ENCODE measurements at regions of chr10 and their contacts with region 1.

Region 1: DNA sequence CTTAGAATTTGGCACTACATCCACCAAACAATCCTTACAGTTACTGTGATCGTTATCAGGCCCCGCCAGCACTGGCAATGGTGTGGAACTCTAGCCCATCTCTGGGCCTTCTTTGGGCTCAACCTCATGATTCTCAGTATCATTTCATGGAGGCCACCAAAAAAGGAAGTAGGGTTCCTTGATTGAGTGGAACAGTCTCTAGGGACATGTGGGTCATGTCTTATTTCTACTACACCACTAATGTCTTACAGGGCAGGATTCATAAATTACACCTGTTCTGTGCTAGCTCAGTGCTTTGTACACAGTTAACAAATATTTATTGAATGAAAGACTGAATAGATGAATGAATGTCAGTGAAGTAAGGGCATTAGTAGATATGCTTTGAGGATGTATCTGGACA is 53.9 kb downstream of the AP3M1 start:
- DNase-seq: no peak
- ATAC-seq: no peak
- H3K4me3 ChIP-seq: no peak overlapping the region
- H3K27ac ChIP-seq: no peak overlapping the region
- H3K4me1 ChIP-seq: peaks cover 17% of the 10 kb centered on the region
- H3K27me3 ChIP-seq: no peaks in the 10 kb centered on the region
- CTCF ChIP-seq: no peak

Region 2: DNA sequence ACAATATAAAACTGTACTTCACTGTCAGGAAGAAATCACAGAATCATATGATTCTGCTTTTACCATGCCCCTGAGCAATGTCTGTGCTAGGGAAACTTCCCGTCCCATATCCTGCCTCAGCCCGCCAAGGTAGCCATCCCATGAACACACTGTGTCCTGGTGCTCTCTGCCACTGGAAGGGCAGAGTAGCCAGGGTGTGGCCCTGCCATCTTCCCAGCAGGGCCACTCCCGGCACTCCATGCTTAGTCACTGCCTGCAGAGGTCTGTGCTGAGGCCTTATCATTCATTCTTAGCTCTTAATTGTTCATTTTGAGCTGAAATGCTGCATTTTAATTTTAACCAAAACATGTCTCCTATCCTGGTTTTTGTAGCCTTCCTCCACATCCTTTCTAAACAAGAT is 22.0 kb after region 1 on chr10:
- CTCF ChIA-PET with region 1: interaction called, 3 read pairs
- POLR2A ChIA-PET with region 1: no interaction called
- intact Hi-C with region 1: loop called (anchors 2 kb)
- DNase-seq: peak; percentile 93
- ATAC-seq: peak; percentile 98
- H3K4me3 ChIP-seq: no peak overlapping the region
- H3K27ac ChIP-seq: peak overlapping the region; percentile 59
- H3K4me1 ChIP-seq: peaks cover 20% of the 10 kb centered on the region
- H3K27me3 ChIP-seq: no peaks in the 10 kb centered on the region
- CTCF ChIP-seq: 0 out of 2 replicates have a peak, but pooled peaks have one; percentile 16

Region 3: DNA sequence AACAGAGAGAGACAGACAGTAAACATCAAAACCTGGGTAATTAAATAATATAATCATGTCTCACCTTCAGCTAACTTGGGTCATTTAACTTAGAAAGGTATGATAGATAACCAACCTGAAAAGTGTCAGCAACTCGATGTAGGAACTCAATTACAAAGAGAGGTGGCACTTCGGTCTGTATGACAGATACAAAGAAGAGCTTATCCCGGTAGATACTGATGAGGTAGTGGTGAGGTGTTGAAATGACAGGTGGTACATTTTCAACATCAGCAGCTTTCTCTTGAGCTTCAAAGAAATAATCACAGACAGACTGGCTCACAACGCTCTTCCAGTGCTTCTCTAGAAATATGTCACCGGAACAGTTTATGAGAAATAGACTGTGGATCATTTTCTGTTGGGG is 41.2 kb after region 1 on chr10:
- CTCF ChIA-PET with region 1: no interaction called
- POLR2A ChIA-PET with region 1: no interaction called
- intact Hi-C with region 1: no loop called
- DNase-seq: no peak
- ATAC-seq: no peak; the same call in 1 of the 2 replicates
- H3K4me3 ChIP-seq: no peak overlapping the region
- H3K27ac ChIP-seq: no peak overlapping the region
- H3K4me1 ChIP-seq: no peaks in the 10 kb centered on the region
- H3K27me3 ChIP-seq: no peaks in the 10 kb centered on the region
- CTCF ChIP-seq: 0 out of 2 replicates have a peak, but pooled peaks have one; percentile 35

Region 4: GRCh38 chr10:75329190-75329745 is 1232.5 kb after region 1 on chr10:
- CTCF ChIA-PET with region 1: no interaction called
- POLR2A ChIA-PET with region 1: interaction called, 12 read pairs
- intact Hi-C with region 1: no loop called
- DNase-seq: no peak
- ATAC-seq: no peak
- H3K4me3 ChIP-seq: no peak overlapping the region
- H3K27ac ChIP-seq: no peak overlapping the region
- H3K4me1 ChIP-seq: no peaks in the 10 kb centered on the region
- H3K27me3 ChIP-seq: peaks cover 28% of the 10 kb centered on the region
- CTCF ChIP-seq: no peak

Measured in PC-3 (cell line).